ENCODE measurements at regions of chrX and their contacts with region 1.

Region 1: DNA sequence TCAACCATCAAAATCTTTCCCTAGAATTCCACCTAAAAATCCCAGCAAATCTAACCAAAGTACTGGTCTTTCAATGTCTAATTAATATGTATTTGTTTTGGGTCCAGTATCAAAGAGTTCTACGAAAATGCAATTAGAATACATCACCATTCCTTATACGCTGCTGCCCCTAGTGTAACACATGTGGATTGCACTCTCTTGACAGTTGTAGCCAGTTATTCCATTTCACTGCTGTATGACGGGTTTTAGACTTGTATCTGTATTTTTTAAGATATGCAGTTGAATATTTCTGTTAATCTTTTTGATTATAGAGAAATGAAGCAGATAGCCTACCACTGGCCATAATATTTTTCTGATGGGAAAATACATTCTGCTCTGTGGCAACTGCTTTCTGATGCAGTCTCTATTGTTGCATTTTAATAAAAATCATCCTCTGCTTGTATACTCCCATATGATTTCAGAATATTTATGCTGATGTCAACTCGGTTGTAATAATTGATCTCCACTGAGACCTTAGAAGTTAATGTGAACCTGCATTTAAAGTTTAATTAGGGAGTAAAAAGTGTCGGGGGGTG is 17.1 kb upstream of the PAGE2B start:
- DNase-seq: peak; percentile 35
- H3K4me3 Mint-ChIP-seq: peak overlapping the region; percentile 39
- H3K27ac Mint-ChIP-seq: no peak overlapping the region
- H3K4me1 Mint-ChIP-seq: peaks cover 18% of the 10 kb centered on the region
- H3K27me3 Mint-ChIP-seq: no peaks in the 10 kb centered on the region

Region 2: DNA sequence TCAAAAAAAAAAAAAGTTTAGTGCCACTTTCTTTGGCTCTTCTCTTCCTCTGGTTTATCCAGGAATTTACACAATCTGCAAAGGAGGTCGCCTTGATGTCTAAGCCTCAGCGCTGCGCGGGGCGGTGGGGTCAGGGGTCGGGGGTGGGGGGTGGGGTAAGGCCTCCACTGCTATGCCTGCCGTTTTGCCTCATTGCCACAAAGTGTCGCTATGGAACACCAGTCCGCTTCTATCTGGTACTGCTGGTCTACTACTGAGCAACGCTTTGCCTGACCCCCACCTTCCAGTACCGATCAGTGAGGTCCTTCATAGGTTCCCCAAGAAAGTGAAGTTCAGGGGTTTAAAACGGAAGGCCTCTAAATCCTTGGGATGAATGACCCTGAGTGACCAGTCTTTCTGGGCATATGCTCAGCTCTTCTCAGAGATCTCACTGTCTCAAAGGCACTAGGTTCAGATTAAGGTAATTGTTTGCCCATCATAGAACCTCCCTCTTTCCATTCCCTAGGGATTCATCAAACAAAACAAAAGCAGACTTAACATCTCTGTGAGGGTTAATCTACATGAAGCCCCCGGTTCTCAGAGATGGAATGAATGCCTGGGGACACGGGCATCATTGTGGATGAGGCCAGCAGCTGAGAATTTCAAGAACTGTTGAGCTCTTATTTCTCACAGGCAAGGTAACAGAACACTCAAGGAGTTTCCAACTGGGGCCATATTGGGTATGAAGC is 634.4 kb before region 1 on chrX:
- CTCF ChIA-PET with region 1: no interaction called
- intact Hi-C with region 1: loop called (anchors 2 kb)
- DNase-seq: peak; percentile 25
- H3K4me3 Mint-ChIP-seq: no peak overlapping the region
- H3K27ac Mint-ChIP-seq: no peak overlapping the region
- H3K4me1 Mint-ChIP-seq: no peaks in the 10 kb centered on the region
- H3K27me3 Mint-ChIP-seq: no peaks in the 10 kb centered on the region

Region 3: GRCh38 chrX:54825716-54826438 is 231.9 kb before region 1 on chrX:
- CTCF ChIA-PET with region 1: no interaction called
- intact Hi-C with region 1: loop called (anchors 5 kb)
- DNase-seq: peak; percentile 36
- H3K4me3 Mint-ChIP-seq: no peak overlapping the region
- H3K27ac Mint-ChIP-seq: no peak overlapping the region
- H3K4me1 Mint-ChIP-seq: no peaks in the 10 kb centered on the region
- H3K27me3 Mint-ChIP-seq: no peaks in the 10 kb centered on the region

Region 4: DNA sequence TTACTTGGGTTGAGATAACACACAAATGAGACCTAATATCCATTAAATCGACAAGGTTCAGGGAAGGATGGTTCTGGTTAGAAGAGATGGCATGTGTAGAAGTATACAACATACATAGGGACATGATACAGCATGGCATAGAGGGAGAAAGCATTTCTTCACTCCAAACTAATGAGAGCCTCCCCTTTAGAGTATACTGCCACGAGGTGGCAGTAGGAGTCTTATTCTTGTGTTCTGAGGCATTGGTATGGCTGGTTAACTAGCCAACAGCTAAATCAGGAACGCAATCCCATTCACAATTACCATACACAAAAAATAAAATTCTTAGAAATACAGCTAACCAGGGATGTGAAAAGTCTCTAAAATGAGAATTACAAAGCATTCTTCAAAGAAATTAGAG is 166.2 kb before region 1 on chrX:
- CTCF ChIA-PET with region 1: interaction called, 20 read pairs
- intact Hi-C with region 1: loop called (anchors 1 kb)
- DNase-seq: peak; percentile 51
- H3K4me3 Mint-ChIP-seq: no peak overlapping the region
- H3K27ac Mint-ChIP-seq: no peak overlapping the region
- H3K4me1 Mint-ChIP-seq: no peaks in the 10 kb centered on the region
- H3K27me3 Mint-ChIP-seq: no peaks in the 10 kb centered on the region

Region 5: DNA sequence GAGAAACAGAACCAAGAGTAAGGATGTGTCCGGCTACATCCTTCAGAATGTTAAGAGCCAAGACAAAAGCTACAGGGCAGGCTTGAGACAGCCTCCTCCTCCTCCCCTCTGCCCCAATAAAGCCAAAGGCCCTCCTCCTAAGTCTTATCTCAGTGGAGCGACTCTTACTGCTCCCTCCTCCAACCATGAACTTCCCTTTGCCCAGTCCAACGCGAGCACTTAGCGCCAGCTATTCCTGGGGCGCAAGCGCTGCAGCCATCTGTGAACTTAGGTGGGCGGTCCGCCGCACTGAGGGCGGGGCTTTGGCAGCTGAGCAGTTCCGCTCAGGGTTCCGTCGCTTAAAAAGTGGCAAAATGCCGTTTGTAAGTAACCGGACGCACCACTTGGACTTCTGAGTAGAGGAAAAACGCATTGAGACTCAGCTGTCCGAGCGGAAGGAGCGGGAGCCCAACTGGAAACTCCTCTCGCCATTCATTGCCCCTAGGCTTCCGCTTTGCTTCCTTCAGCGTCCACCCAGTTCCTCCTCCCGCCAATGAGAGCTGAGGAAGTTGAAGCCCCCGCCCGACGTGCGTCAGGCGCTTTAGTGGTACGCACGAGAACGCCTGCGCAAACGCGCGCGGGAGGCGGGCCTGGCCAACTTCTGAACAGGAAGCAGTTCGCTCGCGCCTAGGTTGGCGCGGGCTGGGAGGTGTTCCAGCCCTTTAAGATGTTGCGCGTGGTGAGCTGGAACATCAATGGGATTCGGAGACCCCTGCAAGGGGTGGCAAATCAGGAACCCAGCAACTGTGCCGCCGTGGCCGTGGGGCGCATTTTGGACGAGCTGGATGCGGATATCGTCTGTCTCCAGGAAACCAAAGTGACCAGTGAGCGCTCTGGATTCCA is 57.8 kb before region 1 on chrX and contains the start of gene APEX2:
- CTCF ChIA-PET with region 1: interaction called, 7 read pairs
- intact Hi-C with region 1: loop called (anchors 2 kb)
- DNase-seq: peak; percentile 89
- H3K4me3 Mint-ChIP-seq: peak within 1 kb of the TSS; percentile 80
- H3K27ac Mint-ChIP-seq: peak within 1 kb of the TSS; percentile 90
- H3K4me1 Mint-ChIP-seq: peaks cover 20% of the 10 kb centered on the region
- H3K27me3 Mint-ChIP-seq: no peaks in the 10 kb centered on the region
- total RNA-seq, gene APEX2: 34.7 to 36.3 TPM